ENCODE measurements at regions of chr15 and their contacts with region 1.

Region 1: DNA sequence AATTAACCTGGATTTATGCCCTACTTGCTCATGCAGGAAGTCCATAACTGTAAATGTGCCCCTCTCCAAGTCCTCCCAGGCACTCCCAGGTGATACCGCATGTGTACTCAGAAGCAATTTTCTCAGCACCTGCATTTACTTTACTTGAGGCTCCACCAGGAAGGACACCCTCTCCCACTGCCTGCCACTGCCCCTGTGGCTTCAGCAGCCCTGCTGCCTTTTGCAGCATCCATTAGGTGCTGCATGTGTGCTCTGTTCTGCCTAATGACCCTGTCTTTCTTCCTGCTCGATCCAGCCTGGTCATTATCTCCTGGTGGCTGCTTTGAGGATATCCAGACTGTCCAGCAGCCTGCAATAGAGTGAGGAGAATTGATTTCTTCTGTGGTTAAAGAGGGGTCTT is 107.6 kb upstream of the SEMA6D start:
- DNase-seq: no peak
- ATAC-seq: no peak
- H3K4me3 ChIP-seq: no peak overlapping the region
- H3K27ac ChIP-seq: no peak overlapping the region
- H3K4me1 ChIP-seq: no peaks in the 10 kb centered on the region
- H3K27me3 ChIP-seq: no peaks in the 10 kb centered on the region
- CTCF ChIP-seq: no peak

Region 2: GRCh38 chr15:47586653-47587224 is 23.0 kb before region 1 on chr15:
- CTCF ChIA-PET with region 1: no interaction called
- POLR2A ChIA-PET with region 1: no interaction called
- intact Hi-C with region 1: loop called (anchors 1 kb)
- DNase-seq: peak; percentile 21
- ATAC-seq: no peak
- H3K4me3 ChIP-seq: no peak overlapping the region
- H3K27ac ChIP-seq: no peak overlapping the region
- H3K4me1 ChIP-seq: no peaks in the 10 kb centered on the region
- H3K27me3 ChIP-seq: no peaks in the 10 kb centered on the region
- CTCF ChIP-seq: no peak